ENCODE measurements at regions of chr17 and their contacts with region 1.

Region 1: DNA sequence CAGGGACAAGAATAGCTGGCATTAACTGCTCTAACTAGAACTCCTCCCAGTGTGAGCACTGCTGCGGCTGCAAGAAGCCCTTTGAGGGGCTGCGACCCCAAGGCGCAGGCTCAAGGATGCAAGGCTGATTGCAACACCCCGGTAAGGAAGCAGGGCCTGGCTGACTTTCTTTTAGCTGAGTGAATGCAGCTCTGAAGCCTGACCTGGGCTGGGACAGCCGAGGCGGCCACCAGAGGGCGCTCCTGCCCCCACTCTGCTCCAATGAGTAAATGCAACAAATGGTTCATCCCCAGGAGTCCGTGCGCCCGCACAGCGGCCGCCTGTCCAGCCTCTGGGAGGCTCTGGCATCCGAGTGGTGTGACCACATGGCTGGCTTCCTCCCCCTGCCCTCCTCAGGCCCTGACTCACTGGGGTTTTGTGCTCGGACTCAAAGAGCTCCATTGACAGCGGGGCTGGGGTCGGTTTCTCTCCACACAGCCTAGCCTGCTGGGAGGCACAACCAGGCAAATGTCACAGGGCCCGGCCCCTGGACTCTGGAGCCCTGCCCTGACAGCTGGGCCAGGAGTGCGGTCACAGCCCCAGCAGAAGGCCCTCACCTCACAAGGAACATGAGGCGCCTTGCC is at the start of gene SMIM5:
- DNase-seq: peak; percentile 89 to 96
- H3K4me3 ChIP-seq: peak within 1 kb of the TSS; percentile 24 to 44 (median 34)
- H3K27ac ChIP-seq: peak within 1 kb of the TSS; percentile 87 to 96 (median 89)
- H3K4me1 ChIP-seq: peaks cover 45 to 56% (median 54%) of the 10 kb centered on the region in 4 donors
- H3K27me3 ChIP-seq: no peaks in the 10 kb centered on the region
- CTCF ChIP-seq: peak in 5 of 7 experiments; percentile 79 to 98 (median 92)
- EP300 ChIP-seq: no peak
- POLR2A ChIP-seq: no peak
- total RNA-seq, gene SMIM5: 0.58 to 12.7 (median 3.6) TPM in 3 of 5 donors, not detected in the others

Region 2: DNA sequence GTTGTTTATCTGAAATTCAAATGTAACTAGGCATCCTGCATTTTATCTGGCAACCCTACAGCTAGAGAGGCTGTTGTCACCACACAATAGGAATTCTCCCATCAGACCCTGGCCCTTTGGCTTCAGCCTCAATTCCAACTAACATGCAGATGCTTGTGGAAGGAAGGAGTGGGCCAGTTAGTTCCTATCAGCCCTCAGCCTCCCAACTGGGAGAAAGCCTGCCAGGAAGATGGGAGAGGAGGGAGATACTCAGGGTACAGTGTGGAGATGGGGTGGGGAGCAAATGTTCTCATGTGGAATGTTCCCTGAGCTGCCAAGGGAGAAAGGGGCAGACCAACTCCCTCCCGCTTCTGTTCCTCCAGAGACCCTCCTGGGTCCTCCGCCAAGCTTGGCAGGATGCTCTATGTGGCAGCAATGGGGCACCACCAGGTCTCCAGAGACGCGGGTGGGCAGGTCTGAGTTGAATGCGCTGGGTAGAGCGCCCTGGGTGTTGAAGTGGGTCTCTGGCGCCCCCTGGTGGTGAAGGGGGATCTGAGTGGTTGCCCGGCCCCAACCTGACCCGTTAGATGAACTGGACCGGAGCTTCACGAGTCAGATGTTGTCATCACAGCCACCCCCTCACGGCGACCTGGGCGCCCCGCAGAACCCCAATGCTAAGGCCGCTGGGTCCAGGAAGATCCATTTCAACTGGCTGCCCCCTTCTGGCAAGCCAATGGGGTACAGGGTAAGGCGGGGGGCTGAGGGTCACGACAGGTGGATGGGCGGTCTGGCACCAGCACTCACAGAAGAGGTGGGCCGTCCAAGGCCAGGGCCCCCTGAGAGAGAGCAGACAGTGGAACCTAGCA is 116.8 kb after region 1 on chr17:
- intact Hi-C with region 1: loop called (anchors 5 kb)
- DNase-seq: peak; percentile 89 to 91
- H3K4me3 ChIP-seq: no peak overlapping the region
- H3K27ac ChIP-seq: no peak overlapping the region
- H3K4me1 ChIP-seq: peaks cover 12 to 48% (median 27%) of the 10 kb centered on the region in 4 donors
- H3K27me3 ChIP-seq: no peaks in the 10 kb centered on the region
- CTCF ChIP-seq: peak in 5 of 7 experiments; percentile 70 to 96 (median 90)
- EP300 ChIP-seq: no peak
- POLR2A ChIP-seq: no peak